ENCODE measurements at regions of chr9 and their contacts with region 1.

Region 1: DNA sequence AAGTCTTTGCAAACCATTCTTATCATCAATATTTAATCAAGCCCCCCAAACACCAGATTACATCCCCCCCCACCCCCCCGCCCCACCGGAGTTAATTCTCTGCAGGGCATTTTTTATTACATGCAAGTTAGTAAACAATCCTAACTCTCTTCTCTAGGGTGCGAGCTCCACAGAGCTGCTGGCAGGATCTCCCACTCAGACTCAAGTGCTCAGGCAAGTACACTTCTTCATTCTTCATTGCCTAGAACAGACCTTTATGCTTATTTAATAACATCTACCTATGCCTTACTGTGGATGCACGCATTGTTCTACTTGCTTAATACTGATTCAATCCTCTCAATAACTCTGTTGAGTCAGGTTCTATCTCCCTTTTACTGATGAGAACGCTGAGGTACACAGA is 9.9 kb downstream of the SAXO1 start:
- DNase-seq: no peak
- ATAC-seq: no peak
- H3K4me3 ChIP-seq: no peak overlapping the region
- H3K27ac ChIP-seq: no peak overlapping the region
- H3K4me1 ChIP-seq: no peaks in the 10 kb centered on the region
- H3K27me3 ChIP-seq: no peaks in the 10 kb centered on the region
- CTCF ChIP-seq: no peak

Region 2: DNA sequence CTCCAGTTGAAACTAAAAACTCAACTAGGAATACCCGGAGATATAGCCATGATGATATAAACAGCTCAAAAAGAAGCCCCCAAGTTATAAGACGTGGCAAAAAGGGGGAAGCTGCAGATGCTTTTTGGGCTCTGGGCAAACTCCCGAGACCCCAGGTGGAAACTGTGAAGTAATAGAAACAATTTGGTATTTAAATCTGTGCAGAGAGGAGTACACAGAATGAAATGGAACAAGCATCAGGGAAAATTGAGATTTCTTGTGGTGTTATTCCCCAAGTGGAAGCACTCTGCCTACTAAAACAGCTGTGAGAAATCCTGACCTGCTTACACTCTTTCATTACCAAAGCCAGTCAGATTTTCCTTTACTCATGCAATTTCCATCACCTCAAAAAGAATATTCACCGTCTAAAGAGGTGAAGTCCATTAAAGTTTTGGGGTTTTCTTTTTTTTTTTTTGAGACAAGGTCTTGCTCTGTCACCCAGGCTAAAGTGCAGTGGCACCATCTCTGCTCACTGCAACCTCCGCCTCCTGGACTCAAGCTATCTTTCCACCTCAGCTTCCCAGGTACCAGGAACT is 13.6 kb before region 1 on chr9:
- CTCF ChIA-PET with region 1: no interaction called
- POLR2A ChIA-PET with region 1: no interaction called
- in situ Hi-C with region 1: no loop called
- intact Hi-C with region 1: no loop called
- DNase-seq: no peak
- ATAC-seq: no peak
- H3K4me3 ChIP-seq: no peak overlapping the region
- H3K27ac ChIP-seq: no peak overlapping the region
- H3K4me1 ChIP-seq: no peaks in the 10 kb centered on the region
- H3K27me3 ChIP-seq: no peaks in the 10 kb centered on the region
- CTCF ChIP-seq: no peak

Region 3: DNA sequence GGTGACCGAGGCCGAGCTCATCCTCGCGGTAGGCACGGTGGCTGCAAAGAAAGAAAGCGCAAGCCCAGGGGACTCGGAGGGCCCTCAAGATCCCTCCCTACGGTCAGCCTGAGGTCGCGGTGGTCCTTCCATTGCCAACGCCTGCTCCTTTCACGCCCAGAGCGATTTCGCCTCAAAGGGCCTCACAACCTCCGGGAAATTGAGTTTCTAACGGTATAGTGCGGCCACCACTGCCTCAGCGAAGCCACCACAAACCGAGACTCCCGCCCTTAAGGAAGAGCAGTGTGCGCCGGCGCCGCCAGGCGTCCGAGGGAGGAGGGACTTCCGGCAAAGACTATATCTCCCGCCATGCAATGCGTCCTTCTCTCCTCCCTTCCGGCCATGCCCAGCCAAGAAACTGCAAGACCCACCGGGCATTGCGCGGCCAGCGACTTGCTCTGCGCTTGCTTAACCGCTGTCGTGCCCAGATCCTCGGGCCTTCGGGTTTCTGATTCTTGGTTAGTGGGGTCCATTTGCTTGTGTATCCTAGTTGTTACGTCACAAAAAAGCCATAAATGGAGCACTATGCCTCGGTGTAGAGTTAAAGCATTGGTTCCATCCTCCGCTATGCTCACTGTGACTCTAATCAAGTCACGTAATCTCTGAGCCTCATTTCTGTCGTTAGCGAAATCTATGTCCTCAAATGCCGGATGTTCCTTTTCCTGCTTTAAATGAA is 79.7 kb after region 1 on chr9 and contains the start of gene HAUS6:
- CTCF ChIA-PET with region 1: no interaction called
- POLR2A ChIA-PET with region 1: no interaction called
- in situ Hi-C with region 1: no loop called
- intact Hi-C with region 1: no loop called
- DNase-seq: peak; percentile 66
- ATAC-seq: peak; percentile 99
- H3K4me3 ChIP-seq: peak within 1 kb of the TSS; percentile 65 to 79
- H3K27ac ChIP-seq: peak within 1 kb of the TSS; percentile 66
- H3K4me1 ChIP-seq: no peaks in the 10 kb centered on the region
- H3K27me3 ChIP-seq: no peaks in the 10 kb centered on the region
- CTCF ChIP-seq: no peak
- total RNA-seq, gene HAUS6: 9.3 TPM

Region 4: DNA sequence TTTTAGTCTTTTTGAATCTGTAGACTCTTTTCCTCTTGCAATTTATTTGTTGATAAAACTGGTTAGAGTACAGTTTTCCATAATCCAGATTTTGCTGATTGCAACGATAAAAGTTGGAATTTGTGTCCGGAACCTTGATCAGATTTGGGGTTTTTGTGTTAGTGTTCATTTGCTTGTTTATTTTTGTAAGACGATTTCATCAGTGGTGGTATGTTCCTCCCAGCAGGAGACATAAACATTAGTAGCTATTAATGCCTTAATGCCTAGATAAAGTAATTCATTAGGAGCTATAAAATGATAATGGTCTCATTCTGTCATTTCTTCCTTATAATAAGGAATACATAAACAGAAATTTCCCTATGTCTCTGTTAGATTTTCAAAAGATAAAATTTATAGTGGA is 335.6 kb after region 1 on chr9:
- CTCF ChIA-PET with region 1: no interaction called
- POLR2A ChIA-PET with region 1: interaction called, 20 read pairs
- in situ Hi-C with region 1: no loop called
- intact Hi-C with region 1: no loop called
- DNase-seq: no peak
- ATAC-seq: no peak
- H3K4me3 ChIP-seq: no peak overlapping the region
- H3K27ac ChIP-seq: no peak overlapping the region
- H3K4me1 ChIP-seq: no peaks in the 10 kb centered on the region
- H3K27me3 ChIP-seq: no peaks in the 10 kb centered on the region
- CTCF ChIP-seq: no peak